ENCODE measurements at regions of chr15 and their contacts with region 1.

Region 1: GRCh38 chr15:72199711-72200212 is 2.2 kb upstream of the GRAMD2A start:
- DNase-seq: peak; percentile 60
- ATAC-seq: peak; percentile 72
- H3K4me3 Mint-ChIP-seq: no peak overlapping the region
- H3K27ac Mint-ChIP-seq: no peak overlapping the region
- H3K4me1 Mint-ChIP-seq: peaks cover 27% of the 10 kb centered on the region
- H3K27me3 Mint-ChIP-seq: peaks cover 18% of the 10 kb centered on the region
- CTCF ChIP-seq: peak; percentile 56

Region 2: GRCh38 chr15:72168111-72168808 is 31.5 kb before region 1 on chr15:
- CTCF ChIA-PET with region 1: no interaction called
- POLR2A ChIA-PET with region 1: no interaction called
- intact Hi-C with region 1: no loop called
- DNase-seq: no peak
- ATAC-seq: no peak
- H3K4me3 Mint-ChIP-seq: no peak overlapping the region
- H3K27ac Mint-ChIP-seq: no peak overlapping the region
- H3K4me1 Mint-ChIP-seq: no peaks in the 10 kb centered on the region
- H3K27me3 Mint-ChIP-seq: peaks cover 9% of the 10 kb centered on the region
- CTCF ChIP-seq: no peak

Region 3: DNA sequence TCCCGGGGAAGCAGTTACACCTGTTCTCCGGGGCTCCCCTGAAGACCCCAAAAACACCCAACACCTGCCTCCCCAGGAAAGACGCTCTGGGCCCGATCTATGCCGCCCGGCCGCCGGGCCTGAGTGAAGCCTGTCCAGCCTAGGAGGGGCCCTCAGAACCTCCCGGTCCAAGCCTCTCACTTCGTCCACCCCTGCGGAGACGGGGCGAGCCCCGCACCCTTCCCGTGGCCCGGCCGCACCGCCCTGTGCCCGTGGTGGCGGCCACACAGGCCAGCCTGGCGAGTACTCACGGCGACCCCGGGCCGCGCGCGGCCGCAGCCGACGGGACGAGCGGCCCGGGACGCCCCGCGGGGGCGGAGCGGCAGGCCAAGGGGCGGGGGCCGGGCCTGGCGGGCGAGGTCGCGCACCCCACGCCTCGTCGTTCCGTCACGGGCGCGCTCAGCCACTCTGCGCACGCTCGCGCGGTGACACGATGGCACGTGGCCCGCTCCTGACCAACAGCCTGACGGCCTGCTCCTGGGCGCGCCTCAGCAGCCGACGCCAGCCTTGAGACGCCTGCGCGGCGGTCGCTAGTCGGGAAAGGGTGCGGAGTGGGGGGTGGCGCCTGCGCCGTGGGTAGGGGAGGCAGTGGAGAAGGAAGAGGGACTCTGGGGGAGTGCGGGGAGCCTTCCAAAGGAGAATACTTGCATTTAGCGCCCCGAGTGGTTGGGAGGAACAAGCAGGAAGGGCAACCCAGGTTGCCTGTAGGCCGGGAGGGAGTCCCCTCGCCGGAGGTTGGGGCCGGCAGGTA is 72.6 kb after region 1 on chr15 and contains the start of gene PARP6:
- CTCF ChIA-PET with region 1: interaction called, 8 read pairs
- POLR2A ChIA-PET with region 1: no interaction called
- intact Hi-C with region 1: loop called (anchors 1 kb)
- DNase-seq: peak; percentile 95
- ATAC-seq: peak; percentile 96
- H3K4me3 Mint-ChIP-seq: peak within 1 kb of the TSS; percentile 87
- H3K27ac Mint-ChIP-seq: peak within 1 kb of the TSS; percentile 86
- H3K4me1 Mint-ChIP-seq: peaks cover 36% of the 10 kb centered on the region
- H3K27me3 Mint-ChIP-seq: no peaks in the 10 kb centered on the region
- CTCF ChIP-seq: no peak
- total RNA-seq, gene PARP6: 70.7 and 81.4 TPM in 2 replicates

Region 4: GRCh38 chr15:72285927-72286516 is 86.3 kb after region 1 on chr15:
- CTCF ChIA-PET with region 1: interaction called, 47 read pairs
- POLR2A ChIA-PET with region 1: interaction called, 4 read pairs
- intact Hi-C with region 1: loop called (anchors 1 kb)
- DNase-seq: peak; percentile 26
- ATAC-seq: peak; percentile 66
- H3K4me3 Mint-ChIP-seq: no peak overlapping the region
- H3K27ac Mint-ChIP-seq: no peak overlapping the region
- H3K4me1 Mint-ChIP-seq: no peaks in the 10 kb centered on the region
- H3K27me3 Mint-ChIP-seq: no peaks in the 10 kb centered on the region
- CTCF ChIP-seq: no peak

Region 5: DNA sequence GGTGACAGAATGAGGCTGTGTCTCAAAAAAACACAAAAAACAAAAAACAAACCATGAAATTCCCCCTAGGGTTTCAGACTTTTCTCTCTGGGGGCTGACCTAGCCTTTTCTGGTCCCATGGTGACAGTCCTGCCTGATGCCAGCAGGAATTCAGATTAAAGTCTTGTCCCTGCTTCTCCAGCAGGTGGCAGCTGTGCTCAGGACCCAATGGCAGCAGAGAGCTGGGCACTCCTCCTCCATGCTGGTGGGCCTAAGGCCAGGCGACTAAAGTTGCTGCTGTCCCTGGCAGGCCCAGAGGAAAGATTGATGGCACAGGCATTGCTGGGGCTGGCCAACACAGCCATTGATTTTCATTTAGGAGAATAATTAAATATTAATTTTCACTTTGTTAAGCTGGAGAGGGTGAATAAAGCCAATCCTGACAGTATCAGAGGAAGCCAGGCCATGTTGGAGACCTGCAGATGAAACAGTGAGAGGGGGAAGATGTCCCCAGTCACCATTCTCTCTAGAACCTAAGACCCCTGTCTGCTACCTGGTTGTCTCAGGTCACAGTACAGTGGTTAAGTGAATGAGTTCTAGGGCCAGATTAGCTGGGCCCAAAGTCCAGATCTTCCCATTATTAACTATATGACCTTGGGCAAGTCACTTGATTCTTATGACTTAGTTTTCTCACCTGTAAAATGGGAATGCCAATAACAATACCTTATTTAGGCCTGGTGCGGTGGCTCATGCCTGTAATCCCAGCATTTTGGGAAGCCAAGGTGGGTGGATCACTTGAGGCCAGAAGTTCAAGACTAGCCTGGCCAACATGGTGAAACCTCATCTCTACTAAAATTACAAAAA is 113.1 kb after region 1 on chr15:
- CTCF ChIA-PET with region 1: interaction called, 4 read pairs
- POLR2A ChIA-PET with region 1: no interaction called
- intact Hi-C with region 1: loop called (anchors 1 kb)
- DNase-seq: peak; percentile 24
- ATAC-seq: peak; percentile 96
- H3K4me3 Mint-ChIP-seq: no peak overlapping the region
- H3K27ac Mint-ChIP-seq: no peak overlapping the region
- H3K4me1 Mint-ChIP-seq: no peaks in the 10 kb centered on the region
- H3K27me3 Mint-ChIP-seq: no peaks in the 10 kb centered on the region
- CTCF ChIP-seq: no peak

Region 6: GRCh38 chr15:72532991-72533601 is 333.3 kb after region 1 on chr15:
- CTCF ChIA-PET with region 1: no interaction called
- POLR2A ChIA-PET with region 1: no interaction called
- intact Hi-C with region 1: loop called (anchors 1 kb)
- DNase-seq: no peak
- ATAC-seq: peak; percentile 56
- H3K4me3 Mint-ChIP-seq: no peak overlapping the region
- H3K27ac Mint-ChIP-seq: no peak overlapping the region
- H3K4me1 Mint-ChIP-seq: peaks cover 5% of the 10 kb centered on the region
- H3K27me3 Mint-ChIP-seq: no peaks in the 10 kb centered on the region
- CTCF ChIP-seq: no peak

Region 7: DNA sequence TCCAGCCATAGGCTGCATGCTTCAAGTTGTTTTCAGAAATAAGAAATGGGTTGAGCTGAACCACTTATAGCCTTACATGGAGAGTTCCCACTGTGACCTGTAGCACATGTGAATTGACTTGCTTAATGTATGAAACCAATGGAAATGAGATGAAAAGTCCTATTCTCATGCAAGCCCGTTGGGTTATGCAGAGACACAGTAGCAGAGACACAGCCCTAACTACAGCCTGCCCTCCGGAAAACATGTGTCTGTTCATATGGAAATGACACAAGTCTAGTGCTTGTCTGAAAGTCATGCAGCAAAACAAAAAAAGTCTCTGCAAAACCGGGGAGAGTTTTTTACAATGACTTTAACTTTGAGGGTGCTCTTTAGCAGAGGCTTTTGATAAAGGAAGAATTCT is 471.8 kb after region 1 on chr15:
- CTCF ChIA-PET with region 1: no interaction called
- POLR2A ChIA-PET with region 1: no interaction called
- intact Hi-C with region 1: loop called (anchors 10 kb)
- DNase-seq: no peak
- ATAC-seq: no peak
- H3K4me3 Mint-ChIP-seq: no peak overlapping the region
- H3K27ac Mint-ChIP-seq: no peak overlapping the region
- H3K4me1 Mint-ChIP-seq: peaks cover 7% of the 10 kb centered on the region
- H3K27me3 Mint-ChIP-seq: peaks cover 4% of the 10 kb centered on the region
- CTCF ChIP-seq: no peak

Measured in activated B cell treated with CpG ODN at 0.5 μM for 24 hours (primary cell).